ENCODE measurements at regions of chr1 and their contacts with region 1.

Region 1: DNA sequence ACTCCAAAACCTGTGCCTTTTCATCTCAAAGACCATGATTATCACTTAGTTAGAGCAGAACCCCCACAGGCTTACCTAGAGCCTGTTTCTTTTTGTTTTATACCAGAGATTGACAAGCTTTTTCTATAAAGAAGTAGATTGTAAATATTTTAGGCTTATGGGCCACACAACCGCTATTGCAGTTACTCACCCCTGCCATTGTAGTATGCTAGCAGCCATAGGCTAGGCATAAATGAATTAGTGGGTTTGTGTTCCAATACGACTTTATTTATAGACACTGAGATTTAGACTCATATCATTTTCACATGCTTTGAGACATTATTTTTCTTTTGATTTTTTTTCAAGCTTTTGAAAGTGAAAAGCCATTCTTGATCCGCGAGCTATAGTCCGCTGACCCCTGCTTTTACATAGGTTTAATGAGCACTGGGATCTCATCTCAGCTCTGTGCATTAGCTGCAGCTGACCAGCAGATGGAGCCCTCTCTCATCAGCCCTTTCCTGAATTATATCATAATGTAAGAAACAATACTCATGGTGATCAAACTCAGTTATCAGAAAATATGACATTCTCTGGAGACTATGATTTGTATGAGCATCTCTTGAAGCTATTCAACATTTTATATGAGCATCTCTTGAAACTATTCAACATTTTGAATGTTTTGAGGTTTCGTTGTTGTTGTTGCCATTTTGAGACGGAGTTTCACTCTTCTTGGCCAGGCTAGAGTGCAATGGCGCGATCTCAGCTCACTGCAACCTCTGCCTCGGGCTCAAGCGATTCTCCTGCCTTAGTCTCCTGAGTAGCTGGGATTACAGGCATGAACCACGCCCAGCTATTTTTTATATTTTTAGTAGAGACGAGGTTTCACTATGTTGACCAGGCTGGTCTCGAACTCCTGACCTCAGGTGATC is 111.9 kb upstream of the L1TD1 start:
- DNase-seq: peak; percentile 53
- H3K4me3 ChIP-seq: no peak overlapping the region
- H3K27ac ChIP-seq: no peak overlapping the region
- H3K4me1 ChIP-seq: no peaks in the 10 kb centered on the region
- H3K27me3 ChIP-seq: no peaks in the 10 kb centered on the region
- CTCF ChIP-seq: peak; percentile 99

Region 2: GRCh38 chr1:62131093-62131725 is 48.5 kb after region 1 on chr1:
- CTCF ChIA-PET with region 1: interaction called, 11 read pairs
- POLR2A ChIA-PET with region 1: no interaction called
- intact Hi-C with region 1: loop called (anchors 5 kb)
- DNase-seq: peak; percentile 80
- H3K4me3 ChIP-seq: no peak overlapping the region
- H3K27ac ChIP-seq: no peak overlapping the region
- H3K4me1 ChIP-seq: no peaks in the 10 kb centered on the region
- H3K27me3 ChIP-seq: no peaks in the 10 kb centered on the region
- CTCF ChIP-seq: peak; percentile 97

Region 3: DNA sequence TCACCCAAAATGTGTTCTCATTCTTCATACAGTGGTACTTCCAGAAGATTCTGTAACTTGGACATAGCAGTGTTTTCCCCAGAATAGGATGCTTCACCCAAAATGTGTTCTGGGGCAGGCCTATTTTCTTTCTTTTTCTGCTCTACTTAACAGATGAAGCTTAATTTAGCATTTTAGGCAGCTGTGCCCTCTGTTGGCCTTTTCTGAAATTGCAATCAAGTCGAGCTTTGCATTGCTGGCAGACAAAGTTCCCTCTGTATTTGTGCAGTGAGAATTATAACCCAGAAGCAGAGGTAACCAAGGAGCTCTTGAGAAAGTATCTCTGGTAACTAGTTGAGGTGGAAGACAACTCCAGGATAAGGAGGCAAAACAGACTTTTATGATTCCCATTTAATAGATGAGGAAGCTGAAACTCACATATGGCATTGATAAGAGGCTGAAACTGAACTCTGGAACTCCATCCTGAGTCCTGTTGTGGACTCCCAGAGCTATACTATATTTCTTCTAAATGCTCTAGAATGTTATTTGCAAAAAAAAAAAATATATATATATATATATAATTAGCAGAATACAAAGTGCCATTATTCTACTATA is 61.6 kb after region 1 on chr1:
- CTCF ChIA-PET with region 1: interaction called, 28 read pairs
- POLR2A ChIA-PET with region 1: no interaction called
- intact Hi-C with region 1: no loop called
- DNase-seq: peak; percentile 77
- H3K4me3 ChIP-seq: no peak overlapping the region
- H3K27ac ChIP-seq: no peak overlapping the region
- H3K4me1 ChIP-seq: no peaks in the 10 kb centered on the region
- H3K27me3 ChIP-seq: no peaks in the 10 kb centered on the region
- CTCF ChIP-seq: peak; percentile 78